ENCODE measurements at regions of chr14 and their contacts with region 1.

Region 1: GRCh38 chr14:60309867-60310552 is 61.0 kb downstream of the PPM1A start:
- DNase-seq: no peak
- ATAC-seq: no peak
- H3K4me3 ChIP-seq: no peak overlapping the region
- H3K27ac ChIP-seq: no peak overlapping the region
- H3K4me1 ChIP-seq: peaks cover 4 to 14% of the 10 kb centered on the region in 2 experiments; a peak in 3 of 5 replicates
- H3K27me3 ChIP-seq: no peaks in the 10 kb centered on the region; a peak in 1 of 5 replicates
- CTCF ChIP-seq: no peak
- EP300 ChIP-seq: no peak
- POLR2A ChIP-seq: no peak
- RAD21 ChIP-seq: no peak

Region 2: GRCh38 chr14:60276342-60276741 is 33.7 kb before region 1 on chr14:
- CTCF ChIA-PET with region 1: no interaction called
- POLR2A ChIA-PET with region 1: no interaction called
- in situ Hi-C with region 1: no loop called
- intact Hi-C with region 1: loop called (anchors 1 kb)
- DNase-seq: no peak
- ATAC-seq: no peak
- H3K4me3 ChIP-seq: no peak overlapping the region
- H3K27ac ChIP-seq: no peak overlapping the region
- H3K4me1 ChIP-seq: peaks cover 6 to 15% of the 10 kb centered on the region in 2 experiments; a peak in 3 of 5 replicates
- H3K27me3 ChIP-seq: no peaks in the 10 kb centered on the region
- CTCF ChIP-seq: no peak
- EP300 ChIP-seq: no peak
- POLR2A ChIP-seq: no peak
- RAD21 ChIP-seq: no peak